Activated naive CD4-positive, alpha-beta T cell treated with anti-CD3 and anti-CD28 coated beads for 36 hours (primary cell): ENCODE measurements at regions of chr3 and their contacts with region 1.

Region 1: GRCh38 chr3:122572940-122573412 is 4.5 kb upstream of the PARP15 start:
- DNase-seq: peak; percentile 75
- H3K4me3 Mint-ChIP-seq: no peak overlapping the region
- H3K27ac Mint-ChIP-seq: peak overlapping the region; percentile 73
- H3K4me1 Mint-ChIP-seq: peaks cover 69% of the 10 kb centered on the region
- H3K27me3 Mint-ChIP-seq: no peaks in the 10 kb centered on the region

Region 2: DNA sequence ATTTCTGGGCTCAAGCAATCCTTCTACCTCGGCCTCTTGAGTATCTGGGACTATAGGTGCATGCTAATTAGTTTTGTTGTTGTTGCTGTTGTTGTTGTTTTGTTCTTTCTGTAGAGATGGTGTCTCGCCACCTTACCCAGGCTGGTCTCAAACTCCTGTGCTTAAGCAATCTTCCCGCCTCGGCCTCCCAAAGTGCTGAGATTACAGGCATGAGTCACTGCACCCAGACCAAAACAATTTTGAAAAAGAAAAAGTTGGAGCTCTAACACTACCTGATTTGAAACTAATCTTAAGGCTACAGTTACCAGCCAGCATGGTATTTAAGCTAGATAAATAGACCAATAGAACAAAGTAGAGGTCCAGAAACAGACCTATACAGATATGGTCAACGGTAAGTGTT is 88.0 kb before region 1 on chr3:
- CTCF ChIA-PET with region 1: no interaction called
- intact Hi-C with region 1: loop called (anchors 1 kb)
- DNase-seq: no peak
- H3K4me3 Mint-ChIP-seq: no peak overlapping the region
- H3K27ac Mint-ChIP-seq: no peak overlapping the region
- H3K4me1 Mint-ChIP-seq: peaks cover 66% of the 10 kb centered on the region
- H3K27me3 Mint-ChIP-seq: no peaks in the 10 kb centered on the region

Region 3: DNA sequence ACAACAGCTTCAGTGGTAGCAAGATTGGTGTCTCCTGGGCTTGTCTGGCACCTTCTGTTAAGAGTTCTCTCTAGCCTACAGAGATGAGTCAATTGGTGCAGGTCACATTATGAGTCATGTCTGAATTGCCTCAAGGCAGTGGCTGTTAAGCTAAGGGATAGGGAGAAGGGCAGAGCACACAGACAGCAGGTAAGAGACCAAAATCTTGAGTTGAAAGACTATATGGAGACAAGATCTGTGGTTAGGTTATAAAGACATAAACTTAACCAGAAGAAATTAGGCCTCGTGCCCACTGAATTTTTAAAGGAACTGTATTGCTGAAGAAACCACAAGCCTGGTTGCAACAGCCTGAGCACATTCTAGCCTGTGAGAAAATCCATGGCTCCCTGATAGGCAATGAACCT is 39.0 kb before region 1 on chr3:
- CTCF ChIA-PET with region 1: no interaction called
- intact Hi-C with region 1: loop called (anchors 1 kb)
- DNase-seq: peak; percentile 77
- H3K4me3 Mint-ChIP-seq: no peak overlapping the region
- H3K27ac Mint-ChIP-seq: peak overlapping the region; percentile 28
- H3K4me1 Mint-ChIP-seq: peaks cover 35% of the 10 kb centered on the region
- H3K27me3 Mint-ChIP-seq: no peaks in the 10 kb centered on the region

Region 4: GRCh38 chr3:122646146-122646988 is 73.4 kb after region 1 on chr3:
- CTCF ChIA-PET with region 1: no interaction called
- intact Hi-C with region 1: loop called (anchors 1 kb)
- DNase-seq: peak; percentile 28
- H3K4me3 Mint-ChIP-seq: peak overlapping the region; percentile 28
- H3K27ac Mint-ChIP-seq: peak overlapping the region; percentile 82
- H3K4me1 Mint-ChIP-seq: peaks cover 31% of the 10 kb centered on the region
- H3K27me3 Mint-ChIP-seq: peaks cover 2% of the 10 kb centered on the region

Region 5: DNA sequence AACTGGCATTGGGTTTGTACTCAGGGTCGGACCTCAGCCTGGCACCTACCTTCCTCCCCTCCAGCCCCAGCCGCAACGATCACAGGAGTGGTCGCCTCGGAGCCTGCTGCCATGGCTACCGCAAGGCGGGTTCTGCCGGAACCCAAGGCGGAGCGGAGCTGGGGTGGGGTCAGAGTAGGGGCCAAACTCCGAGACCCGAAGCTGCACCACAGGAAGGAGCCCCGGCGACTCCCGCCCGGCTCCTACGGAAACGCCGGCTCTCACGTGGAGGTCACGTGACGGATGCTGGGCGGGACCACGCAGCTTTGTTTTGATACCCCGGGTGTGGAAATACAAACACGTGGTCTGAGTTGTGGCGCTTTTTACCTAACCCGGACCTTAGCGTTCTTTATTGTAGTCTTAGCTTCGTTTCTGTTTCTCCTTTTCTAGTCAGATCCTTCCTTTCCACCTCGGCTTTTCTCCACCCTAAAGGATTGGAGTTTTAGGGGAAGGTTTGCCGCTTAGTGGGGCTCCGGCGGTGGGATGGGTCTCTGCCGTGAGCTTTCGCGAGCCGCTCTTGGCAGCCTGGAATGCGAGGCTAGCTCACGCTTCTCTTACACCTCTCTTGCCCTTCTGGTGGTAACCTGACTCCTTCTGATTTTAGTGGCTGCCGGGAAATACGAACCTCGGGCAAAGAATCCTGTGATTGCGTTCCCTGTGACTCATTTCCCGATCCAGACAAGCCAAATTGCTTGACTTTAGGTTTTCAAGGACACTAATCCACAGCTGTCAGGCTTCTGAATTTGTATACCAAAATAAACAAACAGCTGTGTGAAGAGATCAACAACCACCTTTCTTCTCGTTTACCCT is 220.8 kb after region 1 on chr3 and contains the start of gene HSPBAP1:
- CTCF ChIA-PET with region 1: no interaction called
- intact Hi-C with region 1: loop called (anchors 2 kb)
- DNase-seq: peak; percentile 92
- H3K4me3 Mint-ChIP-seq: peak within 1 kb of the TSS; percentile 86
- H3K27ac Mint-ChIP-seq: peak within 1 kb of the TSS; percentile 80
- H3K4me1 Mint-ChIP-seq: peaks cover 30% of the 10 kb centered on the region
- H3K27me3 Mint-ChIP-seq: no peaks in the 10 kb centered on the region
- total RNA-seq, gene HSPBAP1: 3.0 to 3.2 TPM